Lower leg skin (tissue), 4 donors: ENCODE measurements at regions of chr6 and their contacts with region 1.

Region 1: GRCh38 chr6:53361549-53362031 is 12.8 kb upstream of the ELOVL5 start:
- DNase-seq: no peak
- H3K4me3 ChIP-seq: no peak overlapping the region
- CTCF ChIP-seq: no peak
- POLR2A ChIP-seq: no peak

Region 2: GRCh38 chr6:51502996-51503395 is 1858.6 kb before region 1 on chr6:
- intact Hi-C with region 1: loop called (anchors 5 kb)
- DNase-seq: no peak
- H3K4me3 ChIP-seq: no peak overlapping the region
- CTCF ChIP-seq: no peak
- POLR2A ChIP-seq: no peak